ENCODE measurements at regions of chr15 and their contacts with region 1.

Region 1: GRCh38 chr15:71231758-71232157 is 116.5 kb downstream of the THSD4 start:
- DNase-seq: no peak
- H3K4me3 ChIP-seq: no peak overlapping the region
- H3K27ac ChIP-seq: peak overlapping the region in 1 of 2 donors; percentile 25
- H3K4me1 ChIP-seq: no peaks in the 10 kb centered on the region
- H3K27me3 ChIP-seq: no peaks in the 10 kb centered on the region
- CTCF ChIP-seq: no peak
- POLR2A ChIP-seq: no peak

Region 2: GRCh38 chr15:71278989-71279756 is 47.4 kb after region 1 on chr15:
- intact Hi-C with region 1: loop called (anchors 5 kb)
- DNase-seq: peak; percentile 84
- H3K4me3 ChIP-seq: no peak overlapping the region
- H3K27ac ChIP-seq: peak overlapping the region; percentile 60 to 65
- H3K4me1 ChIP-seq: no peaks in the 10 kb centered on the region
- H3K27me3 ChIP-seq: no peaks in the 10 kb centered on the region
- CTCF ChIP-seq: no peak
- POLR2A ChIP-seq: no peak

Region 3: DNA sequence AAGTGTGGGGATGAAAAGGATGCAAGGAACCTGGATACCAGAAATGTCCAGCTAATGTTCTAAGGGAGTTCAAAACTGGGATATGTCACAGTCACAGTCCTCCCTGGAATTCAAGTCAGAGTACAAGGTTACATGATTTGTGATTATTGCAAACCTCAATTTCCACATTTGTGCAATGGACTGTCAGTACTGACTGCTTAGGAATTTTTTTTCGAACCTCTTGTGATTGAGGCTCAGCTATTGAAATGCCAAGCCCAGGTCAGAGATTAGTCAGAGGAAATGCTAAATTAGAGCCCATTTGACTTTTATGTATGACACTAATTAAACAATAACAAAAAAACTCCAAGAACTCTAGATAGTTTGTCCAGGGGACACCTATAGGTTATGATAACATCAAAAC is 93.7 kb after region 1 on chr15:
- intact Hi-C with region 1: no loop called
- DNase-seq: no peak
- H3K4me3 ChIP-seq: no peak overlapping the region
- H3K27ac ChIP-seq: no peak overlapping the region
- H3K4me1 ChIP-seq: no peaks in the 10 kb centered on the region
- H3K27me3 ChIP-seq: no peaks in the 10 kb centered on the region
- CTCF ChIP-seq: no peak
- POLR2A ChIP-seq: no peak

Measured in prostate gland (tissue), 2 donors.